Activated naive CD4-positive, alpha-beta T cell treated with anti-CD3 and anti-CD28 coated beads for 36 hours (primary cell): ENCODE measurements at regions of chr5 and their contacts with region 1.

Region 1: DNA sequence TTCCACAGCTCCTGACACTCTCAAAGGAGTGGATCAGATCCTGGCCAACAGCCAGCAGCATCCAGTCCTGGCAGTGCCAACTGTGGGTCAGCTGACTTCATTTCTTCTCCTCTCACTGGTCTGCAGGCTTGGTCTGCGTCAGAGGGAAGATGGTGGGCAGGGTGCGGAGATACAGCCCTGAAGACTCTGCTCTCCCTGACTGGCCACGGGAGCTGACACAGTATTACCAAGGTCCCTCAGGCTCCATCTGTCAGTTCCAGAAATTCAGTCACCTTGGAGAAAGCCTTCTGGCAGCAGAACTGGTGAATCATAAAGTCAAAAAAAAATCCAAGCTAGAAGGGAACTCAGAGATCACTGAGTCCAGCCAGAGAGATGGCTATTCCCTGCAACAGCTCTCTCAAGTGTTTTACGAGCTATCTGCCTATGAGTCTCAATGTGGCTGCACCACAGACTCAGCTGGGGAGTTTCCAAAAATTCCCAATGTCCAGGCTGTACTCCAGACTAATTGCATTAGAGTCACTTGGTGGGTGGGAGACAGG is 28.0 kb downstream of the C1QTNF2 start:
- DNase-seq: no peak
- H3K4me3 Mint-ChIP-seq: no peak overlapping the region
- H3K27ac Mint-ChIP-seq: no peak overlapping the region
- H3K4me1 Mint-ChIP-seq: no peaks in the 10 kb centered on the region
- H3K27me3 Mint-ChIP-seq: peaks cover 3% of the 10 kb centered on the region

Region 2: GRCh38 chr5:159444441-159445082 is 897.9 kb before region 1 on chr5:
- CTCF ChIA-PET with region 1: no interaction called
- intact Hi-C with region 1: loop called (anchors 10 kb)
- DNase-seq: no peak
- H3K4me3 Mint-ChIP-seq: no peak overlapping the region
- H3K27ac Mint-ChIP-seq: no peak overlapping the region
- H3K4me1 Mint-ChIP-seq: no peaks in the 10 kb centered on the region
- H3K27me3 Mint-ChIP-seq: peaks cover 6% of the 10 kb centered on the region

Region 3: GRCh38 chr5:160021831-160022446 is 320.5 kb before region 1 on chr5:
- CTCF ChIA-PET with region 1: interaction called, 49 read pairs
- intact Hi-C with region 1: loop called (anchors 1 kb)
- DNase-seq: peak; percentile 70
- H3K4me3 Mint-ChIP-seq: no peak overlapping the region
- H3K27ac Mint-ChIP-seq: no peak overlapping the region
- H3K4me1 Mint-ChIP-seq: peaks cover 24% of the 10 kb centered on the region
- H3K27me3 Mint-ChIP-seq: no peaks in the 10 kb centered on the region

Region 4: DNA sequence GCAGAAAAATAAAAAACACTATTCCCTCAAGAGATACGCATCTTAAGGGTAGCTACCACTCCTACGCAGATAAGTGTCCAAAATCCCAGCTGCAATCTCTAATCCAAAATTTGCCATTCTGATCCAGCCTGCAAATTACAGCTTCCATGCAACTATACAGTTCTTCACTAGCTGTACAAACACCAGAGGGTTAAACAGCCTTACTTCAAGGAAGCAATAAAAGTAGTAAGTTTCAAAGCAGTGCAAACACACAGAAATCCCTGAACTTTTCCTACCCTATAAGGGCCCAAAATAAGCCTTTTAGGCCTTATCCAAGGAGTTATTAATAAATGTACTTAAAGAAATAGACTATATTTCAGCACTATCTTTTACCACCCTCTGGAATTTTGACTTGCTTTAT is 262.7 kb before region 1 on chr5:
- CTCF ChIA-PET with region 1: interaction called, 6 read pairs
- intact Hi-C with region 1: loop called (anchors 1 kb)
- DNase-seq: no peak
- H3K4me3 Mint-ChIP-seq: no peak overlapping the region
- H3K27ac Mint-ChIP-seq: no peak overlapping the region
- H3K4me1 Mint-ChIP-seq: no peaks in the 10 kb centered on the region
- H3K27me3 Mint-ChIP-seq: no peaks in the 10 kb centered on the region

Region 5: GRCh38 chr5:160199410-160199911 is 143.0 kb before region 1 on chr5:
- CTCF ChIA-PET with region 1: interaction called, 49 read pairs
- intact Hi-C with region 1: loop called (anchors 1 kb)
- DNase-seq: peak; percentile 68
- H3K4me3 Mint-ChIP-seq: peak overlapping the region; percentile 65
- H3K27ac Mint-ChIP-seq: no peak overlapping the region
- H3K4me1 Mint-ChIP-seq: peaks cover 2% of the 10 kb centered on the region
- H3K27me3 Mint-ChIP-seq: peaks cover 9% of the 10 kb centered on the region

Region 6: DNA sequence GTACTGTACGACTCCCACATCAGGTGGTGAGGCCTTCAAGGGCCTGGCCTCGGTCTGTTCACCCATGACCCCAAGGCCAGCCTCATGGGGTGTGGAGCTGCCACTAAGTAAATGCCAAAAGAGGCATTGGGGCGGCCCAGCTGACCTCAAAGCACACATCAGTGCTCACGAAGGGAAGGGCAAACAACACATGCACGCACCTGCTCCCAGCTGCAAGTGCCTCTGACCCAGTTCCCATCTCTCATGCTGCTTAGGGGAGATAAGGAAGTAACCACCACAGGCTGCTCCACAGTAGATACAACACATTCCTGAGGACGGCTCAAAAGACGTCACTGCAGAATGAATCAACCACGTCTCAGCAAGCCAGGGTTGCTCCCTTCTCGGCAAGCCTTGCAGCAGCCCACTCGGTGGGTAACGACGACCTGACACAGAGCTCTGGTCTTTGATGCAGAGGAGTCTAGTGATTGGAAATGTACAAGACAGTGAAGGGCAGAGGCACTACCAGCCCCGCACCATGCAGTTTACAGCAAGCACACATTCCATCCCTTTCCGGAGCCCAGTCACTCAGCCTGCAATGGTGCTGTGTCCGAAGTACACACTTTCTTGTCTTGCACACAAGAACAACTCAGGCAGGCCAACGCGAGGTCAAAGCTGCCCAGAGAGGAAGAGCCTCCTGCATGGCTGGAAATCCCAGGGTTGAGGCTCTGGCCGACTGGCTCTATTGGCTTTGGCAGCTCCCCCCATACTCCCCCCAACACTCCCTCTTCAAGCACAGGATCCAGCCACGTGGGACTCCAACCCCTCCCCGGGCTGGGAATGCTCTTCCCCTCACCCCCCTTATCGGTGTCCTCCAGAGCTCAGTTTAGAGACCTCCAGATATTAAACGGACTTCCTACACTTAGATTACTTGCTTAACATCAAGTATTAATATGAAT is 81.3 kb before region 1 on chr5:
- CTCF ChIA-PET with region 1: interaction called, 4 read pairs
- intact Hi-C with region 1: loop called (anchors 5 kb)
- DNase-seq: no peak
- H3K4me3 Mint-ChIP-seq: no peak overlapping the region
- H3K27ac Mint-ChIP-seq: no peak overlapping the region
- H3K4me1 Mint-ChIP-seq: no peaks in the 10 kb centered on the region
- H3K27me3 Mint-ChIP-seq: peaks cover 12% of the 10 kb centered on the region

Region 7: GRCh38 chr5:160390787-160391696 is 48.6 kb after region 1 on chr5:
- CTCF ChIA-PET with region 1: interaction called, 3 read pairs
- intact Hi-C with region 1: loop called (anchors 2 kb)
- DNase-seq: no peak
- H3K4me3 Mint-ChIP-seq: no peak overlapping the region
- H3K27ac Mint-ChIP-seq: no peak overlapping the region
- H3K4me1 Mint-ChIP-seq: no peaks in the 10 kb centered on the region
- H3K27me3 Mint-ChIP-seq: no peaks in the 10 kb centered on the region